Endothelial cell of umbilical vein (primary cell): ENCODE measurements at regions of chr18 and their contacts with region 1.

Region 1: DNA sequence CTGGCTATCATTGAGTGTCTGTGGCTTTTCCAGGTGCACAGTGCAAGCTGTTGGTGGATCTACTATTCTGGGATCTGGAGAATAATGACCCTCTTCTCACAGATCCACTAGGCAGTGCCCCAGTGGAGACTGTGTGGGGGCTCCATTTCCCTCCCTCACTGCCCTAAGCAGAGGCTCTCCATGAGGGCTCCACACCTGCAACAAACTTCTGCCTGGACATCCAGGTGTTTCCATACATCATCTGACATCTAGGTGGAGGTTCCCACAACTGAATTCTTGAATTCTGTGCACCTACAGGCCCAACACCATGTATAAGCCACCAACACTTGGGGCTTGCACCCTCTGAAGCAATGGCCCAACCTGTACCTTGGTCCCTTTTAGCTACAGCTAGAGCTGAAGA is 775.4 kb upstream of the CDH2 start:
- DNase-seq: no peak
- H3K4me3 ChIP-seq: no peak overlapping the region
- H3K27ac ChIP-seq: no peak overlapping the region
- H3K4me1 ChIP-seq: no peaks in the 10 kb centered on the region
- H3K27me3 ChIP-seq: no peaks in the 10 kb centered on the region
- CTCF ChIP-seq: no peak
- POLR2A ChIP-seq: no peak

Region 2: DNA sequence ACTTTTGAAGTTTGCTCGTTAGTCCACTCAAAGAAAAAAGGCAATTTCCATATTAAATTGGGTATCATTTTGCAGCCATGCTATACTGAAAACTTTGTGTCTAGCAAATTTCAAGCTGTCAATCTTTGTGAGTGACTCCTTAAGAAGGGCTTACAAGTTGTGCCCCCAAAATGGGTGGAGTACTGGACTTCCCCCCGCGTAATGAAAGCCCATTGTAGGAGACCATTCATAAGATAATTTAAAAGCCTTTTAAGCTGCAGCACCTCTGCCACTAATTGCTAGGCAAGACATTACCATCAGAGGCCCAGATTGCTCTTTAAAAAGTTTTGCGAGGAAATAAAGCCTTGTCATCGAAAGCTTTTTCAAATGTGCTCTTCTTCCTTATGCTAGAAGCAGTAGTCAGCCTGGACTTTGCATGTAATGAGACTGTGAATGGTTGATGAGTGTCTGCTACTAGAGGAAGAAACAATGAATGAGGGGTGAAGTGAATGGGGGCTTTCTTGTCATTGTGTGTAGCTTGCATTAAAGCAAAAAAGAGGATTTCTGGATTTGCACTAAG is 430.1 kb before region 1 on chr18:
- CTCF ChIA-PET with region 1: no interaction called
- POLR2A ChIA-PET with region 1: no interaction called
- dilution Hi-C with region 1: no loop called
- intact Hi-C with region 1: loop called (anchors 10 kb)
- DNase-seq: no peak
- H3K4me3 ChIP-seq: no peak overlapping the region
- H3K27ac ChIP-seq: no peak overlapping the region
- H3K4me1 ChIP-seq: no peaks in the 10 kb centered on the region
- H3K27me3 ChIP-seq: no peaks in the 10 kb centered on the region
- CTCF ChIP-seq: no peak
- POLR2A ChIP-seq: no peak